Naive thymus-derived CD4-positive, alpha-beta T cell (primary cell): ENCODE measurements at regions of chr9 and their contacts with region 1.

Region 1: GRCh38 chr9:128339771-128340690 is at the start of gene SLC27A4:
- DNase-seq: peak; percentile 75 to 86 (median 82)
- ATAC-seq: peak; percentile 96
- H3K4me3 ChIP-seq: peak within 1 kb of the TSS; percentile 66
- H3K4me3 Mint-ChIP-seq: peak within 1 kb of the TSS; percentile 87 to 98 (median 95)
- H3K27ac ChIP-seq: peak within 1 kb of the TSS; percentile 69
- H3K27ac Mint-ChIP-seq: peak within 1 kb of the TSS; percentile 70 to 93 (median 90)
- H3K4me1 ChIP-seq: peaks cover 4 to 12% of the 10 kb centered on the region in 2 donors
- H3K4me1 Mint-ChIP-seq: peaks cover 6 to 11% (median 9%) of the 10 kb centered on the region in 7 donors
- H3K27me3 ChIP-seq: no peaks in the 10 kb centered on the region
- H3K27me3 Mint-ChIP-seq: no peaks in the 10 kb centered on the region
- total RNA-seq, gene SLC27A4: 6.4 to 20.1 (median 12.1) TPM

Region 2: DNA sequence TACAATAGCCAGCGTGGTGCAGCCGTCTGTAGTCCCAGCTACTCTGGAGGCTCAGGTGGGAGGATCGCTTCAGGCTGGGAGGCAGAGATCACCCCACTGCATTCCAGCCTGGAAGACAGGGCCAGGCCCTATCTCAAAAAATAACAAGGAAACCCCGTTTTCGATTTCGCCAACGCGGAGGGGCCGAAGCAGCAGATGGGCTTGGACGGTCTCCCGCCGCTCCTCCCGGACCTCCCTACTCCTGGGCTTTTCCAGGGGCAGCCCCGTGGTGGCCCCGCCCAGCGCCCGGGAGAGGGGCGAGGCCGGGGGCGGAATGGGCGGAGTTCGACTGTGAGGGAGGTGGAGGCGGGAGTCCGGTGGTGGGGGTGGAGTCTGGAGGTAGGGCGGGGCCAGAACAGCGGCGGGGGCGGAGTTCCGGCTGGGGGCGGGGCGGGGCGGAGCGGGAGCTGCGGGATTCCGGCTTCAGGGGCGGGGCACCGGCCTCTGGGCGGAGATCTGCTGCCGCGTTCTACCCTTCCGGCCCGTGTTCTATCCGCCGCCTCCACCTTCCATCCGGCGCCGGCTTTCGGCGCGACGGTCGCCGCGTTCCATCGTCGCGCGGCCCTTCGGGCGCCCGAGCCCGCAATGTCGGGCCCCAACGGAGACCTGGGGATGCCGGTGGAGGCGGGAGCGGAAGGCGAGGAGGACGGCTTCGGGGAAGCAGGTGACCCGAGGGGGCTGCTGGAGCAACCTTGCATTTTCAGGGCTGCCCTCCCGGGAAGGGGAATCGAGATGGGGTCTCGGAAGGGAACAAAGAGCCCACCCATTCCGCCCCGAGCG is 180.0 kb before region 1 on chr9 and contains the start of gene BBLN:
- CTCF ChIA-PET with region 1: no interaction called
- POLR2A ChIA-PET with region 1: no interaction called
- intact Hi-C with region 1: loop called in 1 of 2 experiments (anchors 1 kb)
- DNase-seq: peak; percentile 78 to 94 (median 87)
- ATAC-seq: peak; percentile 94
- H3K4me3 ChIP-seq: peak within 1 kb of the TSS; percentile 97
- H3K4me3 Mint-ChIP-seq: peak within 1 kb of the TSS; percentile 79 to 90 (median 82)
- H3K27ac ChIP-seq: peak within 1 kb of the TSS; percentile 78
- H3K27ac Mint-ChIP-seq: peak within 1 kb of the TSS; percentile 84 to 95 (median 93)
- H3K4me1 ChIP-seq: peaks cover 11 to 12% of the 10 kb centered on the region in 2 donors
- H3K4me1 Mint-ChIP-seq: peaks cover 0 to 28% (median 21%) of the 10 kb centered on the region in 7 donors
- H3K27me3 ChIP-seq: no peaks in the 10 kb centered on the region
- H3K27me3 Mint-ChIP-seq: no peaks in the 10 kb centered on the region
- total RNA-seq, gene BBLN: 42.7 to 87.8 (median 48.0) TPM

Region 3: DNA sequence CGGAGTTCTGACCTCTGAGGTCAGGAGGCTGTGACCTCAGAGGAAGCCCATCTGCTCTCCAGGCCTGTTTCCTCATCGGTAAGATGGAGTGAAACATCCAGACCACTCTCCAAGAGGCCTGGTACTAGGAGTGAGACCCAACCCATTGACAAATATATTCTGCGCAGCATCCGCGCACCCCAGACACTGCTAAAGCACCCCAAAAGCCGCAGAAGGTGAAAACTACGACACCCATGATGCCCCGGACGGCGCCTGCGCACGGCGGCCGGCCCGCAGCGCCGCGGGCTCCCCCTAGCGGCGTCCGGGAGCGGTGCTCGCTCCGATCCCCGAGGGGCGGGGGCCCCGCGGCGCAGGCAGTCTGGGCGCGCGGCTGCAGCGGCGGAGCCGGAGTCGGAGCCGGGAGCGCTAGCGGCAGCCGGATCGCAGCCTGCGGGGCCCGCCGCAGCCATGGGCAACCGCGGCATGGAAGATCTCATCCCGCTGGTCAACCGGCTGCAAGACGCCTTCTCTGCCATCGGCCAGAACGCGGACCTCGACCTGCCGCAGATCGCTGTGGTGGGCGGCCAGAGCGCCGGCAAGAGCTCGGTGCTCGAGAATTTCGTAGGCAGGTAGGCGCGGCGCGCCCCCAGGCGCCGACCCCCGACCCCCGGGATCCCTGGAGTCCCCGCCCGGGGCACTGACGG is 136.9 kb before region 1 on chr9 and contains the start of gene DNM1:
- CTCF ChIA-PET with region 1: no interaction called
- POLR2A ChIA-PET with region 1: no interaction called
- intact Hi-C with region 1: loop called in 1 of 2 experiments (anchors 2 kb)
- DNase-seq: peak; percentile 50 to 89 (median 80)
- ATAC-seq: peak; percentile 99
- H3K4me3 ChIP-seq: peak within 1 kb of the TSS; percentile 51
- H3K4me3 Mint-ChIP-seq: peak within 1 kb of the TSS; percentile 63 to 83 (median 76)
- H3K27ac ChIP-seq: no peak within 1 kb of the TSS
- H3K27ac Mint-ChIP-seq: peak within 1 kb of the TSS in 7 of 9 donors; percentile 3 to 84 (median 73)
- H3K4me1 ChIP-seq: peaks cover 4 to 8% of the 10 kb centered on the region in 2 donors
- H3K4me1 Mint-ChIP-seq: peaks cover 6 to 14% (median 8%) of the 10 kb centered on the region in 7 donors
- H3K27me3 ChIP-seq: peaks cover 0 to 5% of the 10 kb centered on the region in 2 donors
- H3K27me3 Mint-ChIP-seq: peaks cover 0 to 33% (median 6%) of the 10 kb centered on the region in 5 donors
- total RNA-seq, gene DNM1: 0.24 to 2.0 (median 0.94) TPM

Region 4: GRCh38 chr9:128249908-128250838 is 89.9 kb before region 1 on chr9:
- CTCF ChIA-PET with region 1: interaction called, 5 read pairs
- POLR2A ChIA-PET with region 1: no interaction called
- intact Hi-C with region 1: loop called (anchors 1 kb)
- DNase-seq: peak; percentile 96 to 100 (median 98)
- ATAC-seq: peak; percentile 98
- H3K4me3 ChIP-seq: peak overlapping the region; percentile 83
- H3K4me3 Mint-ChIP-seq: peak overlapping the region; percentile 79 to 93 (median 88)
- H3K27ac ChIP-seq: peak overlapping the region; percentile 72
- H3K27ac Mint-ChIP-seq: peak overlapping the region; percentile 60 to 97 (median 95)
- H3K4me1 ChIP-seq: peaks cover 7 to 9% of the 10 kb centered on the region in 2 donors
- H3K4me1 Mint-ChIP-seq: peaks cover 7 to 28% (median 17%) of the 10 kb centered on the region in 7 donors
- H3K27me3 ChIP-seq: no peaks in the 10 kb centered on the region
- H3K27me3 Mint-ChIP-seq: peaks cover 0 to 39% (median 6%) of the 10 kb centered on the region in 5 donors

Region 5: GRCh38 chr9:128361986-128362646 is 22.1 kb after region 1 on chr9:
- CTCF ChIA-PET with region 1: no interaction called
- POLR2A ChIA-PET with region 1: interaction called, 4 read pairs
- intact Hi-C with region 1: loop called in 1 of 2 experiments (anchors 2 kb)
- DNase-seq: peak; percentile 48 to 69 (median 64)
- ATAC-seq: peak; percentile 94
- H3K4me3 ChIP-seq: peak overlapping the region; percentile 61
- H3K4me3 Mint-ChIP-seq: peak overlapping the region; percentile 68 to 92 (median 87)
- H3K27ac ChIP-seq: peak overlapping the region; percentile 48
- H3K27ac Mint-ChIP-seq: peak overlapping the region in 6 of 9 donors; percentile 57 to 81 (median 74)
- H3K4me1 ChIP-seq: peaks cover 5 to 9% of the 10 kb centered on the region in 2 donors
- H3K4me1 Mint-ChIP-seq: peaks cover 0 to 22% (median 6%) of the 10 kb centered on the region in 7 donors
- H3K27me3 ChIP-seq: no peaks in the 10 kb centered on the region
- H3K27me3 Mint-ChIP-seq: no peaks in the 10 kb centered on the region

Region 6: GRCh38 chr9:129080602-129081387 is 740.8 kb after region 1 on chr9 and contains the start of gene DOLPP1:
- CTCF ChIA-PET with region 1: no interaction called
- POLR2A ChIA-PET with region 1: no interaction called
- intact Hi-C with region 1: no loop called
- DNase-seq: peak; percentile 96 to 99 (median 99)
- ATAC-seq: peak; percentile 97
- H3K4me3 ChIP-seq: peak within 1 kb of the TSS; percentile 82
- H3K4me3 Mint-ChIP-seq: peak within 1 kb of the TSS; percentile 88 to 94 (median 90)
- H3K27ac ChIP-seq: peak within 1 kb of the TSS; percentile 79
- H3K27ac Mint-ChIP-seq: peak within 1 kb of the TSS; percentile 69 to 93 (median 87)
- H3K4me1 ChIP-seq: peaks cover 19 to 20% of the 10 kb centered on the region in 2 donors
- H3K4me1 Mint-ChIP-seq: peaks cover 6 to 41% (median 26%) of the 10 kb centered on the region in 7 donors
- H3K27me3 ChIP-seq: no peaks in the 10 kb centered on the region
- H3K27me3 Mint-ChIP-seq: no peaks in the 10 kb centered on the region
- total RNA-seq, gene DOLPP1: 5.7 to 17.1 (median 11.9) TPM